ENCODE measurements at regions of chr17 and their contacts with region 1.

Region 1: GRCh38 chr17:72725433-72726068 is 366.9 kb downstream of the SLC39A11 start:
- DNase-seq: peak; percentile 46
- ATAC-seq: no peak
- H3K4me3 ChIP-seq: no peak overlapping the region
- H3K4me3 Mint-ChIP-seq: no peak overlapping the region
- H3K27ac ChIP-seq: no peak overlapping the region
- H3K27ac Mint-ChIP-seq: no peak overlapping the region
- H3K4me1 ChIP-seq: peaks cover 14 to 16% of the 10 kb centered on the region in 2 donors
- H3K4me1 Mint-ChIP-seq: peaks cover 25% of the 10 kb centered on the region
- H3K27me3 ChIP-seq: no peaks in the 10 kb centered on the region
- H3K27me3 Mint-ChIP-seq: no peaks in the 10 kb centered on the region
- CTCF ChIP-seq: peak; percentile 76

Region 2: DNA sequence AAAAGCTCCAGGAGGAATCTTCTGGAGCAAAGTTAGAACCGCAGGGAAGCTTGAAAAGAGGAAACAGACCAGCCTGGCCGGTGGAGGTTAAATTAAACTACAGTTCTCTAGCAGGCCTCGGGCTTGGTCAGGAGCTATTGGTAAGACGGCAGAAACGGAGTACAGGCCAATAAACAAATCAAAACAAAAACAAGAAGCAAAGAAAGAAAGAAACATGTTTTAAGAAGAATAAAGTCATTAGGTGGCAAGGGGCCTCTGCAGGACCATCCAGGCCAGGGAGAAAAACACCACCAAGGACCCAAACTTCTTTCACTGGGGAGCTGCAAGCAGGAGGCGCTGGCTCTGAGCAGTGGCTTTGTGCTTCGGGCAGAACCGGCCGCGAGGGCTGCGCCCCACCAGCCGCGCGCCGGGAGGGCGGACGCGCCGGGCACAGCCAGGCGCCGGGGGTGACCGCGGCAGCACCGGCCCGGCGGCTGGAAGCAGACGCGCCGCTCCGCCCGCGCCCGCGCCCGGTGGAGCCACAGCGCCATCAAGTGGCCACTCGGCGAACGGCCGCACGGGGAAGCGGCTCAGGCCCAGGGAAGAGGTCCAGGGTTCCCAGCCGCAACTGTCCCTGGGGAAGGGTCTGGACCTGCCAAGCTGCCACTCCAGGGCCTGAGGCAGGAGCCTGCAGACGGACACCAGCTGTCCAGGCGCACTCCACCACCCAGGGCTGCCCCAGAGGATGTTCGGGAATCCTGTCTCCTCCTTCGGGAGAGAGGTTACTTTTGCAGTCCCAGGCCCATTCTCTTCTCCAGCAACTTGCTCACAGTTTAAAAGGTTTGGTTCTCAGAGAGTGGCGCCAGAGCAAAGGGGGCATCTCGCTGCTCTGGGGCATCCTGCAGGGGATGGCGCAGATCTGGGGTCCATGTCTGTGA is 185.3 kb before region 1 on chr17:
- CTCF ChIA-PET with region 1: no interaction called
- POLR2A ChIA-PET with region 1: no interaction called
- intact Hi-C with region 1: no loop called
- DNase-seq: peak; percentile 44
- ATAC-seq: peak; percentile 53
- H3K4me3 ChIP-seq: no peak overlapping the region
- H3K4me3 Mint-ChIP-seq: peak overlapping the region; percentile 11
- H3K27ac ChIP-seq: no peak overlapping the region
- H3K27ac Mint-ChIP-seq: no peak overlapping the region
- H3K4me1 ChIP-seq: no peaks in the 10 kb centered on the region
- H3K4me1 Mint-ChIP-seq: peaks cover 7% of the 10 kb centered on the region
- H3K27me3 ChIP-seq: peaks cover 0 to 11% (median 4%) of the 10 kb centered on the region in 4 experiments
- H3K27me3 Mint-ChIP-seq: peaks cover 50% of the 10 kb centered on the region
- CTCF ChIP-seq: peak; percentile 68

Region 3: GRCh38 chr17:72985881-72986720 is 260.6 kb after region 1 on chr17:
- CTCF ChIA-PET with region 1: no interaction called
- POLR2A ChIA-PET with region 1: no interaction called
- intact Hi-C with region 1: loop called (anchors 5 kb)
- DNase-seq: peak; percentile 59
- ATAC-seq: no peak
- H3K4me3 ChIP-seq: no peak overlapping the region
- H3K4me3 Mint-ChIP-seq: no peak overlapping the region
- H3K27ac ChIP-seq: no peak overlapping the region
- H3K27ac Mint-ChIP-seq: no peak overlapping the region
- H3K4me1 ChIP-seq: peaks cover 0 to 4% of the 10 kb centered on the region in 2 donors
- H3K4me1 Mint-ChIP-seq: peaks cover 3% of the 10 kb centered on the region
- H3K27me3 ChIP-seq: no peaks in the 10 kb centered on the region
- H3K27me3 Mint-ChIP-seq: no peaks in the 10 kb centered on the region
- CTCF ChIP-seq: peak; percentile 71

Region 4: DNA sequence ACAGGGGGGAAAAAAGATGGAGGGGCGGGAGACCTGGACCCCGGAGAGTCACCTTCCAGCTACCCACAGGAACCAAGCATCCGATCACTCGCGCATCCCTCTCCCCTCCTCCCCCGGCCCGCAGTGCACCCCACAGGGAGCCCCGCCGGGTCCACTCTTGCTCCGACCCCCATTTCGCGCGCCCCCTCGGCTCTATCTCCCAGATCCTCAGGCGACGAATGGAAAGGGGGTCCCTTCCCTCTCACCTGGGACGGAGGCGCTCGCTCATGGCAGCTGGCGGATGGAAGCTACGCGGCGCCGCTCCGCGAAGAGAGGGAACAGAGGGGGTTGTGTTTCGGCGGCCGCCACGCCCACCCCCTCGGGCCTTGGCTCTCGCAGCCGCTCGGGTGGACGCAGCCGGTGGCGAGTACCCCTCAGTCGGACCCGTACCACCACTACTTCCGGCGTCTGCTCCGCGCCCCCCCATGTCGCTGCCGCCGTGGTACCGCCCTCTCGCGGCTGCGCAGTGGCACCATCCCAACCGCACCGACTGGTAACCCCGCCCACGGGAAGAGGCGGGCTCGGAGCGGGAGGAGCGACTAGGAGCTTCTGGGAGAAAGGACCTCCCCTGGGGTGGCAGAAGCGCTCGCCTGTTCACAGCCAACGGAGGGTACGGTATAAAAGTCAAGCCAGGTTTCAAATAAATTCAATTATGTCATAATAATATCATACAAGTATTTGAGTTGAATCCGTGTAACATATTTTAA is 506.5 kb after region 1 on chr17:
- CTCF ChIA-PET with region 1: interaction called, 10 read pairs
- POLR2A ChIA-PET with region 1: interaction called, 9 read pairs
- intact Hi-C with region 1: no loop called
- DNase-seq: peak; percentile 96
- ATAC-seq: peak; percentile 96
- H3K4me3 ChIP-seq: peak overlapping the region; percentile 81 to 96 (median 87)
- H3K4me3 Mint-ChIP-seq: peak overlapping the region; percentile 98
- H3K27ac ChIP-seq: peak overlapping the region; percentile 46 to 83
- H3K27ac Mint-ChIP-seq: peak overlapping the region; percentile 98
- H3K4me1 ChIP-seq: peaks cover 15 to 29% of the 10 kb centered on the region in 2 donors
- H3K4me1 Mint-ChIP-seq: peaks cover 55% of the 10 kb centered on the region
- H3K27me3 ChIP-seq: no peaks in the 10 kb centered on the region
- H3K27me3 Mint-ChIP-seq: no peaks in the 10 kb centered on the region
- CTCF ChIP-seq: no peak

Region 5: GRCh38 chr17:73371285-73371684 is 645.7 kb after region 1 on chr17:
- CTCF ChIA-PET with region 1: interaction called, 126 read pairs
- POLR2A ChIA-PET with region 1: no interaction called
- intact Hi-C with region 1: no loop called
- DNase-seq: no peak
- ATAC-seq: no peak
- H3K4me3 ChIP-seq: no peak overlapping the region
- H3K4me3 Mint-ChIP-seq: no peak overlapping the region
- H3K27ac ChIP-seq: no peak overlapping the region
- H3K27ac Mint-ChIP-seq: no peak overlapping the region
- H3K4me1 ChIP-seq: no peaks in the 10 kb centered on the region
- H3K4me1 Mint-ChIP-seq: no peaks in the 10 kb centered on the region
- H3K27me3 ChIP-seq: no peaks in the 10 kb centered on the region
- H3K27me3 Mint-ChIP-seq: peaks cover 4% of the 10 kb centered on the region
- CTCF ChIP-seq: no peak

Region 6: DNA sequence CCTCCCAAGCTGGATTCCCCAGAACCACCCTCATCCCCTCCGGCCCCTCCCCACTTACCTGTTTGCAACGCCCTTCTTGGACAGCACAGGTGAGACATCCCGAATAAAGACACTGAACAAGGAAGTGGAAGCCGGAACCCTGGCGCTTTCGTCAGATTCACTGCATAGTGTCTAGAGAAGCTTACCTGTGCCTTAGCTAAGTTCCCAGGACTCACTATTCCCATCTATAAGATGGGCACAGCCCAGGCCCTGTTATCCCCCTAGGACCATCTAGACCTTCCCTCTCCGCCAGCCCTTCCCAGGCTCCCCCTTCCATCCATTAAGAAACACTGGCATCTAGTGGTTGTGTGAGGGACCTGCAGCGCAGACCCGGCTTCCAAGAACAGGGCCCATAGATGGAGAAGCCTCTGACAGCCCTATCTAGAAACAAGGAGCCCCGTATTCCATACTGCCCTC is 1451.0 kb after region 1 on chr17:
- CTCF ChIA-PET with region 1: no interaction called
- POLR2A ChIA-PET with region 1: no interaction called
- intact Hi-C with region 1: loop called (anchors 5 kb)
- DNase-seq: peak; percentile 41
- ATAC-seq: no peak
- H3K4me3 ChIP-seq: no peak overlapping the region
- H3K4me3 Mint-ChIP-seq: no peak overlapping the region
- H3K27ac ChIP-seq: no peak overlapping the region
- H3K27ac Mint-ChIP-seq: no peak overlapping the region
- H3K4me1 ChIP-seq: no peaks in the 10 kb centered on the region
- H3K4me1 Mint-ChIP-seq: no peaks in the 10 kb centered on the region
- H3K27me3 ChIP-seq: peaks cover 0 to 20% (median 2%) of the 10 kb centered on the region in 4 experiments
- H3K27me3 Mint-ChIP-seq: peaks cover 39% of the 10 kb centered on the region
- CTCF ChIP-seq: peak; percentile 46

Measured in B cell (primary cell).